ENCODE measurements at regions of chr1 and their contacts with region 1.

Region 1: GRCh38 chr1:205711104-205712020 is 31.1 kb upstream of the SLC45A3 start:
- DNase-seq: peak in 8 of 9 experiments; percentile 34 to 86 (median 66)
- ATAC-seq: peak; percentile 95
- H3K4me3 ChIP-seq: no peak overlapping the region
- H3K4me3 Mint-ChIP-seq: no peak overlapping the region
- H3K27ac ChIP-seq: no peak overlapping the region
- H3K27ac Mint-ChIP-seq: no peak overlapping the region
- H3K4me1 ChIP-seq: no peaks in the 10 kb centered on the region
- H3K4me1 Mint-ChIP-seq: peaks cover 13% of the 10 kb centered on the region
- H3K27me3 ChIP-seq: no peaks in the 10 kb centered on the region
- H3K27me3 Mint-ChIP-seq: no peaks in the 10 kb centered on the region
- CTCF ChIP-seq: peak; percentile 90

Region 2: GRCh38 chr1:205477121-205477758 is 234.1 kb before region 1 on chr1:
- CTCF ChIA-PET with region 1: no interaction called
- POLR2A ChIA-PET with region 1: no interaction called
- intact Hi-C with region 1: no loop called
- DNase-seq: no peak
- ATAC-seq: no peak
- H3K4me3 ChIP-seq: no peak overlapping the region
- H3K4me3 Mint-ChIP-seq: no peak overlapping the region
- H3K27ac ChIP-seq: no peak overlapping the region
- H3K27ac Mint-ChIP-seq: no peak overlapping the region
- H3K4me1 ChIP-seq: peaks cover 26% of the 10 kb centered on the region
- H3K4me1 Mint-ChIP-seq: peaks cover 29% of the 10 kb centered on the region
- H3K27me3 ChIP-seq: peaks cover 2 to 4% of the 10 kb centered on the region in 2 experiments
- H3K27me3 Mint-ChIP-seq: peaks cover 35% of the 10 kb centered on the region
- CTCF ChIP-seq: no peak

Region 3: GRCh38 chr1:205528887-205529825 is 182.2 kb before region 1 on chr1:
- CTCF ChIA-PET with region 1: interaction called, 5 read pairs
- POLR2A ChIA-PET with region 1: no interaction called
- intact Hi-C with region 1: loop called (anchors 1 kb)
- DNase-seq: peak; percentile 68 to 92 (median 80)
- ATAC-seq: peak; percentile 90
- H3K4me3 ChIP-seq: peak overlapping the region in 1 of 2 experiments; percentile 26
- H3K4me3 Mint-ChIP-seq: peak overlapping the region; percentile 58
- H3K27ac ChIP-seq: no peak overlapping the region
- H3K27ac Mint-ChIP-seq: no peak overlapping the region
- H3K4me1 ChIP-seq: no peaks in the 10 kb centered on the region
- H3K4me1 Mint-ChIP-seq: peaks cover 5% of the 10 kb centered on the region
- H3K27me3 ChIP-seq: no peaks in the 10 kb centered on the region
- H3K27me3 Mint-ChIP-seq: no peaks in the 10 kb centered on the region
- CTCF ChIP-seq: peak; percentile 90

Region 4: GRCh38 chr1:205700865-205701401 is 10.4 kb before region 1 on chr1:
- CTCF ChIA-PET with region 1: interaction called, 17 read pairs
- POLR2A ChIA-PET with region 1: no interaction called
- intact Hi-C with region 1: no loop called
- DNase-seq: no peak
- ATAC-seq: no peak
- H3K4me3 ChIP-seq: no peak overlapping the region
- H3K4me3 Mint-ChIP-seq: no peak overlapping the region
- H3K27ac ChIP-seq: no peak overlapping the region
- H3K27ac Mint-ChIP-seq: no peak overlapping the region
- H3K4me1 ChIP-seq: no peaks in the 10 kb centered on the region
- H3K4me1 Mint-ChIP-seq: peaks cover 2% of the 10 kb centered on the region
- H3K27me3 ChIP-seq: no peaks in the 10 kb centered on the region
- H3K27me3 Mint-ChIP-seq: no peaks in the 10 kb centered on the region
- CTCF ChIP-seq: no peak

Region 5: GRCh38 chr1:205739348-205740160 is 28.2 kb after region 1 on chr1:
- CTCF ChIA-PET with region 1: interaction called, 15 read pairs
- POLR2A ChIA-PET with region 1: no interaction called
- intact Hi-C with region 1: no loop called
- DNase-seq: no peak
- ATAC-seq: no peak
- H3K4me3 ChIP-seq: no peak overlapping the region
- H3K4me3 Mint-ChIP-seq: no peak overlapping the region
- H3K27ac ChIP-seq: no peak overlapping the region
- H3K27ac Mint-ChIP-seq: no peak overlapping the region
- H3K4me1 ChIP-seq: peaks cover 18% of the 10 kb centered on the region
- H3K4me1 Mint-ChIP-seq: peaks cover 56% of the 10 kb centered on the region
- H3K27me3 ChIP-seq: no peaks in the 10 kb centered on the region
- H3K27me3 Mint-ChIP-seq: no peaks in the 10 kb centered on the region
- CTCF ChIP-seq: no peak

Region 6: DNA sequence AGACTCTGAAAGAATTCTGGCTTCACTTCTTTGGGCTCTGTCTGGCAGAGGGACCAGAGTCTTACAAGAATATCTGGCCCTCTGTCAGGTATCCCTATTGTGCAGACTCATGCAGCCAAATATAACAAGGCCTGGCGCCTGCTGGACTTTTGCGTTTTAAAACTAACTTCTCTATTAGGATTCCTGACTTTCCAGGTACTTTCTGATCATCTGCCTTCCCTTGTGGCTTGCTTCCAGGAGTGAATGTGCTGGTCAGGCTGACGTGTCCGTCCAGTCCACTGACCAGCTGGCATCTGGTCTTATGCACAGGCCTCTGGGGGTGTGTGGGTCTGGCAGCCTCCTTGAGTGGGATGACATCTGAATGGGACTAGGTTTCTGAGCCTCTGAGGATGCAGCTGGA is 72.5 kb after region 1 on chr1:
- CTCF ChIA-PET with region 1: interaction called, 19 read pairs
- POLR2A ChIA-PET with region 1: no interaction called
- intact Hi-C with region 1: loop called in 1 of 2 experiments (anchors 2 kb)
- DNase-seq: no peak
- ATAC-seq: no peak
- H3K4me3 ChIP-seq: no peak overlapping the region
- H3K4me3 Mint-ChIP-seq: no peak overlapping the region
- H3K27ac ChIP-seq: no peak overlapping the region
- H3K27ac Mint-ChIP-seq: no peak overlapping the region
- H3K4me1 ChIP-seq: peaks cover 6% of the 10 kb centered on the region
- H3K4me1 Mint-ChIP-seq: peaks cover 6% of the 10 kb centered on the region
- H3K27me3 ChIP-seq: no peaks in the 10 kb centered on the region
- H3K27me3 Mint-ChIP-seq: no peaks in the 10 kb centered on the region
- CTCF ChIP-seq: no peak

Region 7: DNA sequence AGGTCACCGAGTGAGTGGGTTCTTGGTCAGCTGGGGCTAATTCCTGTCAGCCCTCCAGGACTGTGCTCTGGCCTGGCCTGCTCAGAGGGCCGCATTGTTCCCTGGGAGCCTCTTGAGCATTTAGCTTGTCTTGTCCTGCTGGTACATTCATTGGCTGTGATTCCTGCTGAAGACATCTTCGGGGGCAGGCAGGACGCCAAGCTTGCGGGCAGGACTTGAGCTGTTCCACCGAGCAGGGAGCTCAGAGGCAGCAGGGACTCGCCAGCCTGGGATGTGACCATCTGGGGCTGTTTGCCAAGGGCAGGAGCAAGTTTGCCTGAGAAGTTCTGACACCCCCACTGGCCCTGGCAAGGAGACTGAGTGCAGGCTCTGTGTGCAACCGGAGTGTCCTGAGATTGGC is 238.9 kb after region 1 on chr1:
- CTCF ChIA-PET with region 1: no interaction called
- POLR2A ChIA-PET with region 1: no interaction called
- intact Hi-C with region 1: no loop called
- DNase-seq: no peak
- ATAC-seq: no peak
- H3K4me3 ChIP-seq: no peak overlapping the region
- H3K4me3 Mint-ChIP-seq: no peak overlapping the region
- H3K27ac ChIP-seq: no peak overlapping the region
- H3K27ac Mint-ChIP-seq: no peak overlapping the region
- H3K4me1 ChIP-seq: no peaks in the 10 kb centered on the region
- H3K4me1 Mint-ChIP-seq: no peaks in the 10 kb centered on the region
- H3K27me3 ChIP-seq: no peaks in the 10 kb centered on the region
- H3K27me3 Mint-ChIP-seq: no peaks in the 10 kb centered on the region
- CTCF ChIP-seq: no peak